GM10248 (cell line): ENCODE measurements at regions of chr12 and their contacts with region 1.

Region 1: GRCh38 chr12:116559162-116559935 is at the start of gene MAP1LC3B2:
- DNase-seq: peak; percentile 82
- CTCF ChIP-seq: no peak

Region 2: GRCh38 chr12:116534341-116535121 is 24.8 kb before region 1 on chr12:
- CTCF ChIA-PET with region 1: interaction called, 12 read pairs
- POLR2A ChIA-PET with region 1: interaction called, 15 read pairs
- DNase-seq: no peak
- CTCF ChIP-seq: no peak

Region 3: GRCh38 chr12:116803013-116803736 is 243.8 kb after region 1 on chr12:
- CTCF ChIA-PET with region 1: no interaction called
- POLR2A ChIA-PET with region 1: no interaction called
- DNase-seq: no peak
- CTCF ChIP-seq: no peak